ENCODE measurements at regions of chr20 and their contacts with region 1.

Region 1: GRCh38 chr20:35207950-35208611 is 18.4 kb upstream of the MMP24 start:
- DNase-seq: peak; percentile 84
- H3K4me3 Mint-ChIP-seq: no peak overlapping the region
- H3K27ac Mint-ChIP-seq: no peak overlapping the region
- H3K4me1 Mint-ChIP-seq: no peaks in the 10 kb centered on the region
- H3K27me3 Mint-ChIP-seq: no peaks in the 10 kb centered on the region
- CTCF ChIP-seq: peak; percentile 86

Region 2: GRCh38 chr20:35116258-35116657 is 91.8 kb before region 1 on chr20:
- CTCF ChIA-PET with region 1: interaction called, 11 read pairs
- POLR2A ChIA-PET with region 1: no interaction called
- intact Hi-C with region 1: no loop called
- DNase-seq: no peak
- H3K4me3 Mint-ChIP-seq: no peak overlapping the region
- H3K27ac Mint-ChIP-seq: no peak overlapping the region
- H3K4me1 Mint-ChIP-seq: peaks cover 3% of the 10 kb centered on the region
- H3K27me3 Mint-ChIP-seq: no peaks in the 10 kb centered on the region
- CTCF ChIP-seq: no peak

Region 3: GRCh38 chr20:35122756-35123405 is 85.2 kb before region 1 on chr20:
- CTCF ChIA-PET with region 1: interaction called, 11 read pairs
- POLR2A ChIA-PET with region 1: no interaction called
- intact Hi-C with region 1: no loop called
- DNase-seq: no peak
- H3K4me3 Mint-ChIP-seq: no peak overlapping the region
- H3K27ac Mint-ChIP-seq: no peak overlapping the region
- H3K4me1 Mint-ChIP-seq: no peaks in the 10 kb centered on the region
- H3K27me3 Mint-ChIP-seq: no peaks in the 10 kb centered on the region
- CTCF ChIP-seq: no peak

Region 4: DNA sequence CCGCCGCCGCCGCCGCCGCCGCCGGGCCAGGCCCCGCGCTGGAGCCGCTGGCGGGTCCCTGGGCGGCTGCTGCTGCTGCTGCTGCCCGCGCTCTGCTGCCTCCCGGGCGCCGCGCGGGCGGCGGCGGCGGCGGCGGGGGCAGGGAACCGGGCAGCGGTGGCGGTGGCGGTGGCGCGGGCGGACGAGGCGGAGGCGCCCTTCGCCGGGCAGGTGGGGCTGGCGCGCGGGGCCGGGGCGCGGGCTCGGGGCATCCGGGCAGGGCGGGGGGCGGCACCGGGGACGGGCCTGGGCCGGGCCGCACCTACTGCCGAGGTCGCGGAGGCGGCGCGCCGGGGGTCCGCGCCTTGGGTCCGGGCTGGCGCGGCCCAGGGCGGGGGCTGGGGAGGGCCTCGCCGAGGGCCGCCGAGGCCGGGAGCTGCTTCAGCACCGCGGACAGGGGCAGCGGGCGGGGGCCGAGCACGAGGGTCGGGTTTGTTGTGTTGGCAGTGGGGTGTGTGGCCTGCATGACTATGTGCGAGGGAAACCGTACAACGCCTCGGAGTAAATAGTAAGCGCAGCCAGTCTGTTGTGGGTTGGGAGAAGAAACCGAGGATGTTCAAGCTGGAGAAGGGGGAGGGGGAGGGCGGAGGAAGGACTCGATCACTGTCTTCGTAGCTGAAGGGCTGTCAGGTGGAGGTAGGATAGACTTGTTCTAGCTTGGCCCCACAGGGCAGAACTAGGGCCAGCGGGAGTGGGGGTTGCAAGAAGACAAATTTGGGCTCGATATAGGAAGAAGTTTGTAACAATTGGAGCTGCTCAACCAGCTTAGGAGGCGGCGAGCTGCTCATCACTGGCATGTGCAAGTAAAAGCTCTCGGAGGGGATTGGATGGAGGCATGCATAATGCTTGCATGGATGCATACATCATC is 18.9 kb after region 1 on chr20:
- CTCF ChIA-PET with region 1: interaction called, 11 read pairs
- POLR2A ChIA-PET with region 1: no interaction called
- intact Hi-C with region 1: no loop called
- DNase-seq: peak; percentile 15
- H3K4me3 Mint-ChIP-seq: peak overlapping the region; percentile 49
- H3K27ac Mint-ChIP-seq: no peak overlapping the region
- H3K4me1 Mint-ChIP-seq: no peaks in the 10 kb centered on the region
- H3K27me3 Mint-ChIP-seq: peaks cover 64% of the 10 kb centered on the region
- CTCF ChIP-seq: no peak

Region 5: GRCh38 chr20:35269055-35269781 is 61.1 kb after region 1 on chr20:
- CTCF ChIA-PET with region 1: interaction called, 14 read pairs
- POLR2A ChIA-PET with region 1: no interaction called
- intact Hi-C with region 1: loop called (anchors 2 kb)
- DNase-seq: peak; percentile 72
- H3K4me3 Mint-ChIP-seq: no peak overlapping the region
- H3K27ac Mint-ChIP-seq: no peak overlapping the region
- H3K4me1 Mint-ChIP-seq: peaks cover 11% of the 10 kb centered on the region
- H3K27me3 Mint-ChIP-seq: no peaks in the 10 kb centered on the region
- CTCF ChIP-seq: peak; percentile 82